Activated CD4-positive, alpha-beta T cell treated with anti-CD3 and anti-CD28 coated beads for 36 hours (primary cell): ENCODE measurements at regions of chrX and their contacts with region 1.

Region 1: DNA sequence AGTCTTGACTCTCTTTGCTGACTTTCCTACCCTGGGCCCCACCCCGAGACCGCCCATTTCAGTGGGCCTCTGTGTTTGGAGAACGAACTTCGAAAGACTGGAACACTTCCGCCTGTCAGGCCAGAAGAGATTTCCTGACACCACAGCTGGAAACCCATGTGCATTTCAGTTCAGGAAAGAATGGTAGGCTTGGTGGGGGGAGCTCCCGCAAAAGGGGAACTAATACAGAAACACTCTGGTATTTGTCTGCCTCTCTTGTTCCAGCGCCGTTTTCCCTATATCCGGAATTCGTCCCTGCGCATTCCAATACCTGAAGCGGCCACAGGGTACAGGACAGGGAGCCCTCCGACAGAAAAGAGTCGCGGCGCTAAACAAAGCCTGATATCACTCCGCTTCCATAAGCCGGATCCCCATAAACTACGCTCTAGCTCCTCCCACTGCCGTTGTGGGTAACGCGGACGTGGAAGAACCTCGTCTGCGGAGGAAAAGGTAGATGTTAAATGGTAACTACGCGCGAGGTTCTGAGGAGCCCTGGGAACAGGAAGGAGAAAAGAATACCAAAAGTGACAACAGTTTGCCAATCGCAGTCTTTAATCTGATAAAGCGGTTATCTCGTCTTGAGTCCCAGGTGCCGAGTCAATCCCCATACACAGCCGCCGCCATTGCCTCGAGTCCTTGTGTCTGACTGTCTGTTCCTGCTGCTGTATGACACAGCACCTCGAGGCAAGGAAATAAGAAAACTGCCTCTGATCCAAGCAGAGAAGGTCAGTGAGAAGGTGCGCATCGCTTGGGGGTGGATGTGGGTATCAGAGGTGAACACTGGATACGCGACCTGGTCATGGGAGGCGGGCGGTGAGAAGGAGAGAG is at the start of gene ARMCX5:
- DNase-seq: peak; percentile 80
- ATAC-seq: peak; percentile 92
- H3K4me3 Mint-ChIP-seq: peak within 1 kb of the TSS; percentile 89
- H3K27ac Mint-ChIP-seq: peak within 1 kb of the TSS; percentile 98
- H3K4me1 Mint-ChIP-seq: peaks cover 22% of the 10 kb centered on the region
- H3K27me3 Mint-ChIP-seq: no peaks in the 10 kb centered on the region
- total RNA-seq, gene ARMCX5: 12.6 to 13.3 TPM

Region 2: DNA sequence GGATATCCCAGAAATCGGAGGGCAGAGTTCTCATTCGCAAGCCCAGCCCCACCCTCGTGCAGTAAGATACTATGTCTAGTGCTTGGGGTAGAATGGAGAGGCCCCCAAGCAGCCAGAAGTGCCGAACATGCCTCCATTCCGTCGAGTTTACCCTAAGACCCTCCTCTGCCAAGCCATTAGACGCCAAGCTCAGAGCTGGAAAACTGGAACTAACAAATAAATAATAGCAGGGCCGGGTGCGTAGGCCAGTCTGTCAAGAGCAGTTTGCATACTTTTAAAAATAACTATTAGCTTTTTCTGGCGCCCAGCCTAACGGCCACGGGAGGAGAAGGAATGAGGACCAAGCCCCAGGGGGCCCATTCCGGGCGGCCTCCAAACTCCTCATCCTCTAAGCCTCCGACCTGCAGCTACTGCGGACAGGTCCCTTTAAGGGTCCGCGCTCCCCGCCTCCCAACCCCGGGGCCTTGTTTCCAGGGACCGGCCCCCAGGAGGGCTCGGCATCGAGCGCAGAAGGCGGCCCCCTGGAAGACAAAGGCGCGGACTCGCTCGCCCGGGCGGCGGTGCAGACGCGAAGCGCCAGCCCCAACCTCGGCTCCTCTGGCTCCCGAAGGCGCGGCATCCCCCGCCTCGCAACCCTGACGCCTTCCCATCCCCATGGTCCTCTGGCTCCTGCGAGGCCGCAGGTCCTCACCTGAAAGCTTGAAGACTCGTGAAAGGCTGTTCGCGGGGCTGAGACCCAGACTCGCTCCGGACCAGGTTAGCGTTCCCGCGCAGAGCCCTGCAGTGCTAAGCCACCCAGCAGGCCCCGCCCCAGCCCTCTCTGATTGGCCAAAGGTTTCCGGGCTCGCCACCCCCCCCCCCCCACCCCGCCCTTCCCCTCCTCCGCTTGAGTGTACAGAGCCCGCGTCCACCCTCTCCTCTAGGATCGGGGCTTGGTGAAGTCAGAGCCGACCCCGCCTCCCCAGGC is 83.1 kb before region 1 on chrX and contains the start of gene TMSB15A:
- CTCF ChIA-PET with region 1: no interaction called
- POLR2A ChIA-PET with region 1: no interaction called
- intact Hi-C with region 1: loop called in 1 of 2 experiments (anchors 2 kb)
- DNase-seq: peak; percentile 75
- ATAC-seq: peak; percentile 98
- H3K4me3 Mint-ChIP-seq: peak within 1 kb of the TSS; percentile 73
- H3K27ac Mint-ChIP-seq: peak within 1 kb of the TSS; percentile 65
- H3K4me1 Mint-ChIP-seq: peaks cover 4% of the 10 kb centered on the region
- H3K27me3 Mint-ChIP-seq: peaks cover 35% of the 10 kb centered on the region
- total RNA-seq, gene TMSB15A: 0.84 to 1.1 TPM

Region 3: DNA sequence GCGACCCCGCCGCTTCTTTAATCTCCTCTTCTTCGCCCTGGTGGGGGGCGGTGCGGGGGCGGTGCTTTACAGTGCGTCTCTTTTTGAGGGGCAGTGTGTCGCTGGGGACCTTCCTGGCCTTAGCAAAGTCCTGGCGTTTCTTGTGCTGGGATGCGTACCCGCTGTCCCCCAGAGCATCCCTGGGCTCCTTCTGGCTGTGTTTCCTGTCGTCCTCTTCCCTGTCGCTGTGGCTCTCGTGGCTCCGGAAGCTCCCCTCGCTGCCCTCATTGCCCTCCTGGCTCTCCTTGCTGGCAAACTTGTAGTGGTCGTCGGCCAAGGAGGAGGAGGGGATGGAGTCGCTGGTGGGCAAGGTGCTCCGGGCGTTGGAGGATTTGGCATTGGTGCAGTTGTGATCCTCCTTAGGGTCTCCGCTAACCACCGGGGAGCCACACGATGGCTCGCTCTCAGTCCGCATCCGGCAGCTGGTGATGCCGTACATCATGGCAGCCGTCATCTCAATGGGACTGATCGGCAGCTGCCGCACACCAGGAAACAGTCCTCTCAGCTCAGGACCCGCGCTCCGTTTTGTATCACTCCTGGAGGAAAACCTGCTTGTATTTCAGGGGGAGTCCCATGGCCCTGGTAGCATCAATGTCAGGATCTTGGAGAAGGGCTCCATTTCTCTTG is 52.4 kb before region 1 on chrX:
- CTCF ChIA-PET with region 1: no interaction called
- POLR2A ChIA-PET with region 1: no interaction called
- intact Hi-C with region 1: loop called in 1 of 2 experiments (anchors 10 kb)
- DNase-seq: peak; percentile 32
- ATAC-seq: peak; percentile 79
- H3K4me3 Mint-ChIP-seq: peak overlapping the region; percentile 71
- H3K27ac Mint-ChIP-seq: peak overlapping the region; percentile 51
- H3K4me1 Mint-ChIP-seq: peaks cover 2% of the 10 kb centered on the region
- H3K27me3 Mint-ChIP-seq: peaks cover 3% of the 10 kb centered on the region

Region 4: DNA sequence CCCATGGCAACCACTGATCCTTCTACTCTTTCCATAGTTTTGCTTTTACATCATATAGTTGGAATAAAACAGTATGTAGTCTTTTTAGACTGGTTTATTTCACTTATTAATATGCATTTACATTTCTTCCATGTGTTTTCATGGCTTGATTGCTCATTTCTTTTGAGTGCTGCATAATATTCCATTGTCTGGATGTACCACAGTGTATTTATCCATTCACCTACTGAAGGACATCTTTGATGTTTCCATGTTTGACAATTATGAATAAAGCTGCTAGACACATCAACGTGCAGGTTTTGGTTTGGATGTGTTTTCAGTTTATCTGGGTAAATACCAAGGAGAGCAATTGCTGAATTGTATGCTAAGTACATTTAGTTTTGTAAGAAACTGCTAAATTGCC is 38.2 kb after region 1 on chrX:
- CTCF ChIA-PET with region 1: no interaction called
- POLR2A ChIA-PET with region 1: no interaction called
- intact Hi-C with region 1: no loop called
- DNase-seq: no peak
- ATAC-seq: no peak
- H3K4me3 Mint-ChIP-seq: no peak overlapping the region
- H3K27ac Mint-ChIP-seq: no peak overlapping the region
- H3K4me1 Mint-ChIP-seq: no peaks in the 10 kb centered on the region
- H3K27me3 Mint-ChIP-seq: no peaks in the 10 kb centered on the region

Region 5: DNA sequence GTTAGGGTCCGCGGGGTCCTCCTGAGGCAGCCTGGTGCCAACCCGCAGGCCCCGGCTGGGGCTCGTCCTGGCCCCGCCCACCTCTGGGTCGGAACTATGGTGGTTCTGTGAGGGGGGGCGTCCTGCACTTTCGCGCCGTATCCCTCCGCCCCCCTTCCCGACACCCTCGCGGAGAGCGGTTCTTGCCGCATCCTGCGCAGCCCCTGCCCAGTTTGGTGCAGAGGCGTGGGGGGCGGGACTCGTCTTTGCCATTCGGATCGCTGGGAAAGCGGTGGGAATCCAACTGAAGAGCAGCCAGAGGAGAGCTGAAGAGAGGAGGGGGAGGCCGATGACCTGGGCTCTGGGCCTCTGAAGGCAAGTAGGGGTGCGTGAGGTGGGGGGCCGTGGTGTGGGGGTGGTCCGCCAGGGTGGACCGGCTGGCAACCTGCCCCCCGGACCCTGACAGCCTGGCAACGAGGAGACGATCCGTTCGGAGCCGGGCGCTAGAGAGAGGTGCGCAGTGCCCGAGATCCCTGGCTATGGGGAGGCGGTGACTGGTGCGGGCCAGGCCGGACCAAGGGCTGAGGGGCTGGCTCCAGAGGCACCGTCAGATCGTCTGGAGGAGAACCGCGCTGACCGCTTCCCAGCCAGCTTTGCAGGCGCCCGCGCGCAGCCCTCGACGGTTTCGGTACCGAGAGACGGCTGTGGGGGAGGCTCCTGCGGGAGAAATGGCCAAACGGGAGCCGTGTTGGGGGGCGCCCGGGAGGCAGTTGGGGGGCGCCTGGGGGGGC is 52.1 kb after region 1 on chrX and contains the start of gene GPRASP1:
- CTCF ChIA-PET with region 1: no interaction called
- POLR2A ChIA-PET with region 1: no interaction called
- intact Hi-C with region 1: loop called in 1 of 2 experiments (anchors 2 kb)
- DNase-seq: peak; percentile 61
- ATAC-seq: peak; percentile 52
- H3K4me3 Mint-ChIP-seq: peak within 1 kb of the TSS; percentile 81
- H3K27ac Mint-ChIP-seq: peak within 1 kb of the TSS; percentile 94
- H3K4me1 Mint-ChIP-seq: peaks cover 21% of the 10 kb centered on the region
- H3K27me3 Mint-ChIP-seq: no peaks in the 10 kb centered on the region
- total RNA-seq, gene GPRASP1: 4.2 to 5.1 TPM

Region 6: GRCh38 chrX:102659790-102660757 is 60.8 kb after region 1 on chrX:
- CTCF ChIA-PET with region 1: no interaction called
- POLR2A ChIA-PET with region 1: interaction called, 4 read pairs
- intact Hi-C with region 1: loop called in 1 of 2 experiments (anchors 2 kb)
- DNase-seq: peak; percentile 91
- ATAC-seq: peak; percentile 99
- H3K4me3 Mint-ChIP-seq: peak overlapping the region; percentile 87
- H3K27ac Mint-ChIP-seq: peak overlapping the region; percentile 92
- H3K4me1 Mint-ChIP-seq: peaks cover 23% of the 10 kb centered on the region
- H3K27me3 Mint-ChIP-seq: no peaks in the 10 kb centered on the region

Region 7: DNA sequence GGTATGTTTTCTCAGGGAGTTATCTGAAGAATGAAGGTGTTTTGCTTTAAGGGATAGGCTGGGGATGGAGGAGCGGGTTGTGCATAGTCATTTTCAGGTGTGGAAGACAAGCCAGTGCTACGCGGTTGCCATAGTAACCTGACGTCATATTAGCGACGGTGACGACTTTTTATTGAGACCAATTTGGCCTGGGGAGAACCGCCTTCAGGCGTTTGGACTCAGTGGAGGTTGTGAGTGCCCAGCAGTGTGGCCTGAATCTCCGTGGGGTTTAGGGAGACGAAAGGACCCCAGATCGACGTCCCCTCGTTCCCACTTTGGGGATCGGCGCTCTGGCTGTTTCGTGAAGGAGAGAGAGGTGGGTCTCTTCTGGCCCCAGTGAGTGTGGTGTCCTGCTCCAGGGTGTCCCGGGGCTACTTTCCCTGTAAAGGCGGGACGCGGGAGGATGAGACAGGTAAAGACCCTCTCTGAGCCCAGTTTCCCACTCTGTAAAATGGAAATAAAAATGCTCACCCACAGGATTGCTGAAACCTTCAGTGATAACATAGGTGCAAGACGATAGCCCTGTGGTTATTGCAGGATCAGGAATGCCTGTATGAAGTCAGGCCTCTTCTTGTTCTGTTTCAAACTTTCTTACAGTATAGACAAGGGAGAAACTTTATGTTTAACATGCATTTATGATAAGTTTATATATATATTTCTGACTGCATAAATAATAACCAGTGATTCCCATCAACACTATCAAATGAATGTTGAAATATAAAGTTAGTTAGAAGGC is 169.9 kb after region 1 on chrX:
- CTCF ChIA-PET with region 1: no interaction called
- POLR2A ChIA-PET with region 1: no interaction called
- intact Hi-C with region 1: loop called in 1 of 2 experiments (anchors 1 kb)
- DNase-seq: peak; percentile 86
- ATAC-seq: peak; percentile 89
- H3K4me3 Mint-ChIP-seq: peak overlapping the region; percentile 80
- H3K27ac Mint-ChIP-seq: peak overlapping the region; percentile 94
- H3K4me1 Mint-ChIP-seq: peaks cover 10% of the 10 kb centered on the region
- H3K27me3 Mint-ChIP-seq: no peaks in the 10 kb centered on the region